Panc1 (cell line): ENCODE measurements at regions of chr18 and their contacts with region 1.

Region 1: GRCh38 chr18:58417752-58418151 is 211.1 kb downstream of the ALPK2 start:
- DNase-seq: no peak
- ATAC-seq: no peak
- H3K4me3 ChIP-seq: no peak overlapping the region
- H3K27ac ChIP-seq: no peak overlapping the region
- H3K4me1 ChIP-seq: no peaks in the 10 kb centered on the region
- H3K27me3 ChIP-seq: no peaks in the 10 kb centered on the region; the same call in 1 of the 2 replicates
- CTCF ChIP-seq: no peak

Region 2: DNA sequence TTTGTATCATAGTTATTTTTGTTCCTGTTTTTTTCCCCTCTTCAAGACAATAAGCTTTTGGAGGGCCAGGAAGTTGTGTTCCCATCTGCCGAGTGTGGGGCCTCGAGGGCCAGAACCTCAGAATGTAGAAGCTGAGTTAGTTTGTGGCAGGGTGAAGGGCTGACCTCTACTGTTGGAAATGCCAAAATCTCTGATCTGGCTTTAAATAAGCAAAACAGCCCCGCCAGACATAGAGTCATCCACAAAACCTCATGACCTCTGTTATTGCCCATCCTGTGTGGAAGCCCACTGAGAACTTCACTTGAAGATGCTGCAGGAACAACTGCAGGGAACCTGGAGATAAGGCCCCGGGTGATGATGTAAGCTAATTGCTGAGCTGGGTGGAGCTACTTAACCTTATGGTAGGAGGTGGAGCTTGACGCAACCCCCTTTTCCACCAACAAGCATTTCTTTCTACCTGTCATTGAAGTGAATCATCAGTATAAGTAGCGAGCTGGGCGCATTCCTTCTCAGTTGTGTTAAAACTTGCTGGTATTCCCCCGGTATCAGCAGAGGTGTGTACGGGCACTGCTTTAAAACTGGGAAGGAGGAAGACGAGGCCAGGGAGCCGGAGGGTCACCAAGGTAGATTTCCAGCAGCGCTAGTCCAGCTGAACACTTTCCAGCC is 196.6 kb before region 1 on chr18:
- CTCF ChIA-PET with region 1: no interaction called
- POLR2A ChIA-PET with region 1: no interaction called
- in situ Hi-C with region 1: no loop called
- intact Hi-C with region 1: no loop called
- DNase-seq: peak; percentile 82
- ATAC-seq: peak; percentile 75
- H3K4me3 ChIP-seq: peak overlapping the region; percentile 44 to 69
- H3K27ac ChIP-seq: peak overlapping the region; percentile 87
- H3K4me1 ChIP-seq: peaks cover 30% of the 10 kb centered on the region
- H3K27me3 ChIP-seq: no peaks in the 10 kb centered on the region
- CTCF ChIP-seq: peak; percentile 1; the same call in 1 of the 2 replicates

Region 3: DNA sequence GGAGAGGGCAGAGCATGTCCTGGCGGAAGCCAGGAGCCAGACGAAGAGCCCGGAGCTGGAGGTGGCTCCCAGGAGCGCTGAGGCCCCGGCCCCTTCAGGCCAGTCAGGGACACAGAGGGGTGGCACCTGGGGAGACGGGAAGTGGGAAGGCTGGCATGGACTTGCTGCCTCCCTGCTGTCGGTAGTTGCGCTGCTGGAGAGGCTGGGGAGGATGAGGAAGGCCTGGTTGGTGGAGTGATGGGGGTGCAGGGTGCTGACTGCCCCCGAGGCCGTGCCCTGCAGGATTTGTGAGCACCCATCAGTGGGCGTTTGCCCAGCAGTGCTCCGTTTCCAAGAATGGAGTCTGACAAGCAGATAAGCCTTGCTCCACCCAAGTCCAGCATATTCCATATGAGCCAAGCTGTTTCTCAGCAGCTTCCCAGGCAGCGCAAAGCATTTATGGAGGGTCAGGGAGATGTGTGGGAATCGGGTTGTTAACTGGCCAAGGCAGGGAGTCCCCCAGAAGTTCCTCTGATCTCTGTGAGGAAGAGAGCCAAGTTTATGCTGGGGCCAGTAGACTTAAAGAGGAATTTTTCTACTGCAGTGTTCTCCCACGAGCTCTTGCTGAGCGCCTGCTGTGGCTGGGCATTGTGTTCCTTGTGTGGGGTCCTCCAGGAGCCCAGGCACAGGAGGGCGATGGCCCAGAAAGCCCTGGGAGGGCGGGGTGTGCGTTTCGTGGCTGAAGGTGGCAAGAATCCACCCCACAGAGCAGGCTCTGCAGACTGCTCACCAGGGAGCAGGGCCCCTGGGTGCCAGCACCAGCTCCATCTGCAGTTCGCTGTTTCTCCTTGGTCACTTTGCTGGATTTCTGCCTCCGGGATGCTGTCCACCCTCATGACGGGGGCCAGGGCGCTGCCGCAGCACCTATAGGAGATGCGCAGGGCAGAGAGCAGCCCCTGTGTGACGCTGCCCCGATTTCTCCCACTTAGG is 39.1 kb before region 1 on chr18:
- CTCF ChIA-PET with region 1: no interaction called
- POLR2A ChIA-PET with region 1: no interaction called
- in situ Hi-C with region 1: no loop called
- intact Hi-C with region 1: no loop called
- DNase-seq: no peak
- ATAC-seq: no peak
- H3K4me3 ChIP-seq: no peak overlapping the region
- H3K27ac ChIP-seq: no peak overlapping the region
- H3K4me1 ChIP-seq: no peaks in the 10 kb centered on the region
- H3K27me3 ChIP-seq: no peaks in the 10 kb centered on the region
- CTCF ChIP-seq: no peak

Region 4: GRCh38 chr18:58476516-58477256 is 58.9 kb after region 1 on chr18:
- CTCF ChIA-PET with region 1: no interaction called
- POLR2A ChIA-PET with region 1: interaction called, 11 read pairs
- in situ Hi-C with region 1: no loop called
- intact Hi-C with region 1: no loop called
- DNase-seq: no peak
- ATAC-seq: no peak
- H3K4me3 ChIP-seq: no peak overlapping the region
- H3K27ac ChIP-seq: no peak overlapping the region
- H3K4me1 ChIP-seq: no peaks in the 10 kb centered on the region
- H3K27me3 ChIP-seq: no peaks in the 10 kb centered on the region; the same call in 1 of the 2 replicates
- CTCF ChIP-seq: no peak